Activated CD4-positive, alpha-beta T cell treated with anti-CD3 and anti-CD28 coated beads for 36 hours (primary cell): ENCODE measurements at regions of chr12 and their contacts with region 1.

Region 1: DNA sequence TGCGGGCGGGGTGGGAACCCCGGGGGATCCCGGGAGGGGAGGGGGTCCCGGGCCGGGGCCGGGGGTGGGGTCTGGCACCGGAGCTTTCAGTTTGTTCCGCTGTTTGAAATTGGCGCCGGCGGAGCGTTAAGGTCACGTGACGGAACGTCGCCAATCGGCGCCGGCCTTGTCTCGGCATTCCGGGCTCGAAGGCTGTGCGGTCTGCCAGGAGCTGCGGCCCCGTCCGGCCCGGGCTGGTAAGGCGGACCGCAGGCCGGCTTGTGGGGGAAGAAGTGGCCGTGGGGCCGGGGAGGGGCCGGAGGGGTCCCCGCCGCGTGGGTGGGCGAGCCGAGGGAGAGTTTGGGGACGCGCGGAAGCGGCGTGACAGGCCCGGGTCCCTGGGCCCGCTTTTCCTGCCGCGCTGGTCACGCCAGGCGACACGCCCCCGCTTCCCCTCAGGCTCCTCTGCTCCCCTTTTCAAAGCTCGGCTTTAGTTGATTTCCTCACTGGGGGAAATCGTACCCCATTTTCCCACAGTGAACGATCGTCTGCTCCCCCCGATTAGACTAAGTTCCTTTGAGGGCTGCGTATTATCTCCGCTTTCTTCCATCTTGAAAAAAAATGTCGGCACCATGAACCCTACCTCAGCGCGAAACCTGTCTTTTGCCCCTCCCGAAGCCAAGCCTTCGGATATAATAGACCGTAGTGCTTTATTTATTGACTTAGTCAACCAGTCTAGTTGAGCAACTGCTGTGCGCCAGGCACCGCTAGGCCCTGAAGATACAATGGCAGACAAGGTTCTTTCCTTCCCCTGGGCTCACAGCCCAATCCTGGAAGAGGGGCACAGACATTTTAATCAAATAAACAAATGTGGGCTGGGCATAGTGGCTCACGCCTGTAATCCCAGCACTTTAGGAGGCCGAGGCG is at the starts of genes FOXM1 and RHNO1:
- DNase-seq: peak; percentile 92
- ATAC-seq: peak; percentile 77
- H3K4me3 Mint-ChIP-seq: peak within 1 kb of the TSS; percentile 99
- H3K27ac Mint-ChIP-seq: peak within 1 kb of the TSS; percentile 99
- H3K4me1 Mint-ChIP-seq: peaks cover 31% of the 10 kb centered on the region
- H3K27me3 Mint-ChIP-seq: no peaks in the 10 kb centered on the region
- total RNA-seq, gene FOXM1: 74.5 to 92.3 TPM
- total RNA-seq, gene RHNO1: 61.1 to 91.4 TPM

Region 2: GRCh38 chr12:2691006-2691344 is 186.3 kb before region 1 on chr12:
- CTCF ChIA-PET with region 1: no interaction called
- POLR2A ChIA-PET with region 1: no interaction called
- intact Hi-C with region 1: loop called in 1 of 2 experiments (anchors 5 kb)
- DNase-seq: peak; percentile 76
- ATAC-seq: peak; percentile 66
- H3K4me3 Mint-ChIP-seq: peak overlapping the region; percentile 79
- H3K27ac Mint-ChIP-seq: peak overlapping the region; percentile 79
- H3K4me1 Mint-ChIP-seq: peaks cover 26% of the 10 kb centered on the region
- H3K27me3 Mint-ChIP-seq: peaks cover 5% of the 10 kb centered on the region

Region 3: DNA sequence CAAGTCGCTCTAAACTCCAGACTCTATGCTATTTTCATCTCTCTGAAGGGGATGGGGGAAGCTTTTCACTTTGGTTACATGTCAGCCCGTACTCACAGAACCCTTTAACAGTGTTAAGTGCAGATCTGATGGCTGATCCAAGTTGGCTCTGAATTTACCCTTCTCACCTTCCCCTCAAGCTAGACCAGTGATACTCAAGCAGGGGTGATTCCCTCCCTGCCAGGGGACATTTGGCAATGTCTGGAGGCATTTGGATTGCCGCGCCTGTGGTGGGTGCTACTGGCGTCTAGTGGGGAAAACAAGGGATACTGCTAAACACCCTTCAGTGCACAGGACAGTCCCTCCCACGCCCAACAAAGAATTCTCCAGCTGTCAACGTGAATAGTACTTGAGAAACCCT is 14.4 kb before region 1 on chr12:
- CTCF ChIA-PET with region 1: interaction called, 8 read pairs
- POLR2A ChIA-PET with region 1: interaction called, 10 read pairs
- intact Hi-C with region 1: loop called in 1 of 2 experiments (anchors 1 kb)
- DNase-seq: no peak
- ATAC-seq: no peak
- H3K4me3 Mint-ChIP-seq: no peak overlapping the region
- H3K27ac Mint-ChIP-seq: no peak overlapping the region
- H3K4me1 Mint-ChIP-seq: peaks cover 2% of the 10 kb centered on the region
- H3K27me3 Mint-ChIP-seq: no peaks in the 10 kb centered on the region

Region 4: DNA sequence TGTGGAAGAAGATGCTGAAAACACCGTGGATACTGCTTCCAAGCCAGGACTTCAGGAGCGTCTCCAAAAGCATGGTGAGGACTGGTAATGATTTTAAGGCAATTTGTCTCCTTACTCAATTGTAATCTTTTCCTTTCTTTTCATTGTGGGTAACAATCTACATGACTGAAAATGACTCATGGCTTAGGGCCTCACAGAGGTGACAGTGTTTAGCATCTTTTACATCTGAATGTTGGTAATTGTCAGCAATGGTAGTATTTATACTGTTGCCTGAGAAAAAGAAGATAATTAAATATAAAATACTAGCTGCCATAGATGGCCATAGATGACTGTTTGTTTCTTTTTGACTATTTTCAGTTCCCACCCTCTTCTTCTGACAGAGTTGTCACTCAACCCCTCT is 45.0 kb after region 1 on chr12:
- CTCF ChIA-PET with region 1: no interaction called
- POLR2A ChIA-PET with region 1: no interaction called
- intact Hi-C with region 1: no loop called
- DNase-seq: no peak
- ATAC-seq: peak; percentile 73
- H3K4me3 Mint-ChIP-seq: no peak overlapping the region
- H3K27ac Mint-ChIP-seq: no peak overlapping the region
- H3K4me1 Mint-ChIP-seq: peaks cover 11% of the 10 kb centered on the region
- H3K27me3 Mint-ChIP-seq: no peaks in the 10 kb centered on the region

Region 5: DNA sequence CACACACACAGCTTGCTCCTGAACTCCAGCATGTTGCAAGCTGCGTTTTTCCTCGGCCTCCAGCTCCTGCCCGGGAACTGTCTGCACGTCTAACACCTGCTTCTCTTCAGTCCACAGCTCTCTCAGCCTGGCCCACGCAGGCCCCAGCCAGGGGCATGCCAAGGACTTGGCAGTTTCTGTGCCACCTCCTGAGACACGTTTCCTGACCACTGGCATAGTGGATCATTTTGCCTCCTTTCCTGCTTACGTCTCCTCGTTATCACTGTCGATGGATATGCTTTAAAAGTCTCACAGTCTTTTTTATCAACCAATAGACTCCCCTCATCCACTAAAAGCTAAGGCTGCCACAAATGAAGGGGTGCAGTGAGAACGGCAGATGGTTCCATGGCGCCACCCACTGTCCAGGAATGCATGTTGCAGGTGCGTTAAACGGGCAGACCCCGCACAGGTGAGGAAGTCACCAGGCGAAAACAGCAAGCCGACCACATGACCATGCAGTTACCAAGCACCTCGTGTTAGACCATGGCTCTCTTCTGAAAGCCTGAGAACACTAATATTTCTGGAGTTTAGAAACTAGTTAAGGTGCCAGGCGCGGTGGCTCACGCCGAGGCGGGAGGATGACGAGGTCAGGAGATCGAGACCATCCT is 67.2 kb after region 1 on chr12:
- CTCF ChIA-PET with region 1: interaction called, 7 read pairs
- POLR2A ChIA-PET with region 1: no interaction called
- intact Hi-C with region 1: loop called in 1 of 2 experiments (anchors 2 kb)
- DNase-seq: peak; percentile 83
- ATAC-seq: peak; percentile 86
- H3K4me3 Mint-ChIP-seq: no peak overlapping the region
- H3K27ac Mint-ChIP-seq: no peak overlapping the region
- H3K4me1 Mint-ChIP-seq: no peaks in the 10 kb centered on the region
- H3K27me3 Mint-ChIP-seq: peaks cover 3% of the 10 kb centered on the region